Ascending aorta (tissue), 2 donors: ENCODE measurements at regions of chr2 and their contacts with region 1.

Region 1: DNA sequence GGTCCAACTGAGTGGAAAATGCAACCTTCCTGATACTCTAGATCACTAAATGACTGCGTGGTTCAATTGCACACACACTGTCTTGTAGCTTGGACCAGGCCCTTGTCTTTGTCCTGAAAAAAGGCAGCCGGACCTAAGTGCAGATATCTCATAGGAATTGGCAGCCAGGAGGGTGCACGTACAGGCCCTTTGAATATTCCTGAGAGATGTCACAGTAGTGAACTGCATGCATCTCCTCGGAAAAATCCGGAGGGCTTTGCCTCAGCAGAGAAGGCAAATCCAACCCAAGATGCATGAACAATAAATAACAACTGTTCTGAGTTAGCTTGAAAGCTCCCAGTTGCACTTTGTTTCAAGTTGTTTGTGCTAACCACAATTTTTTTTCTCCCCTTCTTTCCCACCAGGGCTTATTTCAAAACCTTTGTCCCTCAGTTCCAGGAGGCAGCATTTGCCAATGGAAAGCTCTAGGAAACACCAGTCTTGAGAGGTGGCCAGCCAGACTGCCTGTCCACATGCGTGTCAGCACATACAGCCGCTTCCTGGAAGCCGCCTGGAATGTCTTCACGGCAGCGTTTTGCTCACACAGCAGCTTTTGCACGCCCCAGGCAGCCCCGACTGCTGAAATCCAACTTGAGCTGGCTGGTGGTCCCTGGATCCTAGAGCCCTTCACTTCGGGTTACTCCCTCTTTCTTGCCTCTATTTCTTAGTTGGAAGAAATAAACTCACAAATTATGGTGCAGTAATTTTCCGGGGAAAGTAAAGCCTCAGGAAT is 54.4 kb upstream of the FOSL2 start:
- DNase-seq: peak in 1 of 2 donors; percentile 92
- H3K4me3 ChIP-seq: no peak overlapping the region
- H3K27ac ChIP-seq: peak overlapping the region; percentile 45 to 57
- H3K4me1 ChIP-seq: peaks cover 10 to 62% of the 10 kb centered on the region in 2 donors
- H3K27me3 ChIP-seq: no peaks in the 10 kb centered on the region
- CTCF ChIP-seq: no peak

Region 2: GRCh38 chr2:27723372-27724144 is 614.7 kb before region 1 on chr2:
- intact Hi-C with region 1: loop called (anchors 5 kb)
- DNase-seq: peak in 1 of 2 donors; percentile 90
- H3K4me3 ChIP-seq: no peak overlapping the region
- H3K27ac ChIP-seq: peak overlapping the region; percentile 87 to 95
- H3K4me1 ChIP-seq: peaks cover 24 to 45% of the 10 kb centered on the region in 2 donors
- H3K27me3 ChIP-seq: no peaks in the 10 kb centered on the region
- CTCF ChIP-seq: peak; percentile 84 to 97 (median 90)

Region 3: GRCh38 chr2:27798948-27799645 is 539.1 kb before region 1 on chr2:
- intact Hi-C with region 1: loop called (anchors 5 kb)
- DNase-seq: peak; percentile 58 to 95
- H3K4me3 ChIP-seq: no peak overlapping the region
- H3K27ac ChIP-seq: peak overlapping the region; percentile 96 to 98
- H3K4me1 ChIP-seq: peaks cover 30 to 57% of the 10 kb centered on the region in 2 donors
- H3K27me3 ChIP-seq: no peaks in the 10 kb centered on the region
- CTCF ChIP-seq: no peak

Region 4: DNA sequence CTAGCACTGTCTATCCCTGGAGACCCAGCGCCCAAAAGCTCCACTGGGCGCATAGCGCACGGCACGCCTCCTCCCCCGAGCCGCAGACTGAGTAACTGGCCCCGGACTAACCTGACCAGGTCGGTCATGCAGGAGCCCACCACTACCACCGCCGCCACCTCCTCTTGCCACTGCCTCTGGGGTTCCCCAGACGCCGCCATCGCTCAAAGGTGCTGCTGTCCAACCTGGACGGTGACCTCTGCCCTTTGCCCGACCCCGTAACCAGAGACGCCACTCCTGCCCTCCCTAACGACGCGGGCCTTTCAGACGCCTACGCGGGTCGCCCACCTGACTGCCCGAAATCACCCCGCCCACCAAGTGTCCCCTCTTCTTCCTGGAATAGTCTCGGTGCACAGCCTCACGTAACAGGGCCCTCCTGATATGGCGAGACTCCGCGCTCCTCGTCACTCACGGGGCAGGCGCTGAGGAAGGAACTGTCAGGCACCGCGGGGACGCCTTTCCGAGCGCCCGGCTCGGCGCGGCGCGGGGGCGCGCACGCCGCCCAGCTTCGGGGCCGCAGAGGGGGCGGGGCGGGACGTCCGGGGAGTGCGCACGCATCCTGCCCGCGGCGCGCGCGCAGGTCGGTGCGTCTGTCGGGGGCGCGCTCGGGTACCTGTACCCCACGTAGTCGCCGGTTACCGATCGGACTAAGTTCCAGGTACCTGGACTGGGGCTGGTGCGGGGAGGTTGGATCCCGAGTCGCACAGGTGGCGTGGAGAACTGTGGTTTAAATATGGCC is 447.9 kb before region 1 on chr2 and contains the starts of genes BABAM2 and RBKS:
- intact Hi-C with region 1: loop called (anchors 5 kb)
- DNase-seq: peak; percentile 75 to 91
- H3K4me3 ChIP-seq: peak within 1 kb of the TSS; percentile 69 to 72
- H3K27ac ChIP-seq: peak within 1 kb of the TSS; percentile 90 to 95
- H3K4me1 ChIP-seq: peaks cover 0 to 21% of the 10 kb centered on the region in 2 donors
- H3K27me3 ChIP-seq: no peaks in the 10 kb centered on the region
- CTCF ChIP-seq: no peak
- total RNA-seq, gene BABAM2: 19.6 TPM
- total RNA-seq, gene RBKS: not detected

Region 5: DNA sequence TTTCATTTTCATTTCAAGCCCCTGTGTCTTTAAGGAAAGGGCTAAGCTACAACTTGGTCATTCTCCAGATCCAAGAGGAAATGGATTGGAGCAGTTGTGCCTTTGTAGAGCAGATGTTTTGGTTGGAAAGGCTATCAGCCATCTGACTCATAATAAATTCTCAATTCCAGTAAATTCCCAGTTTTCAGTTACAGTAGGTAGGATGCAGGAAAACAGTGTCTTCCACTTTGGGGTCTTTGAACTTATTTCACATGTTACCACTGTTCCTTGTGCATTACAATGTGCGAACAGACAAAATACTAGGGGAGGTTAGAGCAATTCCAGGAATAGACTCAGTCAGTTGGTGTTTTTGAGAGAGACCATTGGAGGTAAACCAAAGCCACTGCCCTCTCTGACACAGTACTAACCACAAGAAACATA is 235.8 kb before region 1 on chr2:
- intact Hi-C with region 1: loop called (anchors 5 kb)
- DNase-seq: no peak
- H3K4me3 ChIP-seq: peak overlapping the region; percentile 5 to 18
- H3K27ac ChIP-seq: peak overlapping the region; percentile 74 to 75
- H3K4me1 ChIP-seq: peaks cover 3 to 34% of the 10 kb centered on the region in 2 donors
- H3K27me3 ChIP-seq: no peaks in the 10 kb centered on the region
- CTCF ChIP-seq: no peak

Region 6: DNA sequence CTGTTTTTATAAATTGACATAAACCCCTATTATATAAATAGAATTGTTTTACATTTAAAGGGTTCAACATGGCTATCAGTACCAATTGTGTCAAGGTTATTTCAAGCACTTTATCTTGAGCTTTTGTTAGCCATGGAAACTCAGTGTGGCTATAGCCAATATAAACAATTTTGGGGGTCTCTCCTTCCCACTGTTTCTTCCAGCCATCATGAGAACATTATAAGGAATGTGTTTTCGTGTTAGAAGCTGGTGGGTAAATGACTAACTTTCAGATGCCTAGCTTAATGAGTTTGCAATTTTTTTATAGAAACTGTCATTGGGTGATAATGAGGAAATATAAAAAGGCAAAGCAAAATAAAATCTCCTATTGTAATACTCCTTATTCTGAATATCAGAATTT is 99.0 kb before region 1 on chr2:
- intact Hi-C with region 1: no loop called
- DNase-seq: no peak
- H3K4me3 ChIP-seq: no peak overlapping the region
- H3K27ac ChIP-seq: no peak overlapping the region
- H3K4me1 ChIP-seq: peaks cover 0 to 3% of the 10 kb centered on the region in 2 donors
- H3K27me3 ChIP-seq: no peaks in the 10 kb centered on the region
- CTCF ChIP-seq: no peak

Region 7: DNA sequence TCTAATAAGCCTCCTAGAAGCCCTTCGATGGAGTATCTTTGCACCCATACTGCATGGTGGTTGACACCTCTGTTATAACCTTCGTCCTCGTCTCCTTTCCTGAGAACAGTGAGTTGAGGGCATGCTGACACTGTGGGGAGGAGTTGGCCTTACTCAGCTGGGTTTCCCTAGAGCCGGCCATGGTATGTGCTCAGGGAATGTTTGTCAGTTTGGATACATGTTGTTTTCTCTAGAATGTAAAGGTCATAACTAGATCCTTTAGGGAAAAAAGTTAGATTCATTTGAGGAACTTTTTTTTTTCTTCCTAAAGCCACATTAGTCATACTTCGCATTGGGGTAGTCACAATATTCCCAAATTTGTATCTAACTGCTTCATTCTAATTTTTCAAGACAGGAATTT is 51.6 kb before region 1 on chr2:
- intact Hi-C with region 1: loop called (anchors 5 kb)
- DNase-seq: no peak
- H3K4me3 ChIP-seq: no peak overlapping the region
- H3K27ac ChIP-seq: peak overlapping the region; percentile 87 to 92
- H3K4me1 ChIP-seq: peaks cover 8 to 17% of the 10 kb centered on the region in 2 donors
- H3K27me3 ChIP-seq: no peaks in the 10 kb centered on the region
- CTCF ChIP-seq: no peak